Sigmoid colon (tissue), 7 donors: ENCODE measurements at regions of chr14 and their contacts with region 1.

Region 1: DNA sequence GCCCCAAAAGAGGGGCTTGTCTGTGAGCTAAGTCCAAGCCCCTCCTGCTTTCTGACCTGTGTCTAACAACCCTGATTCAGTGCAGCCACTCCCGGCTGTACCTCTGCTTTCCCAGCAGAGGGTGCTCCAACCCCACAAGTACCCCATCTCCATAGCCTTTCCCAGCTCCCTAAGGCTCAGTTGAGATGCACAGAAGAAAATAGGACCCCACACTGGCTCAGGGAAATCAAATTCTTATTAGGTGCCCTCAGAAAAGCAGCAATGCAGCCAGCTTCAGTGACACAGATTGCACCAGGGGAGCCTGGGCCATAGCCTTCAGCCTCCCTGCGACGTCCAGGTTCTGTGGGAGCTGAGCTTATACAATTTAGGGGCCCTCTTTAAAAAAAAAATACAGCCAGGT is 49.9 kb downstream of the LRRC74A start:
- DNase-seq: peak; percentile 82
- H3K4me3 ChIP-seq: no peak overlapping the region
- H3K27ac ChIP-seq: no peak overlapping the region
- H3K4me1 ChIP-seq: no peaks in the 10 kb centered on the region
- H3K27me3 ChIP-seq: no peaks in the 10 kb centered on the region
- CTCF ChIP-seq: peak; percentile 90 to 95 (median 92)
- EP300 ChIP-seq: no peak
- POLR2A ChIP-seq: no peak

Region 2: DNA sequence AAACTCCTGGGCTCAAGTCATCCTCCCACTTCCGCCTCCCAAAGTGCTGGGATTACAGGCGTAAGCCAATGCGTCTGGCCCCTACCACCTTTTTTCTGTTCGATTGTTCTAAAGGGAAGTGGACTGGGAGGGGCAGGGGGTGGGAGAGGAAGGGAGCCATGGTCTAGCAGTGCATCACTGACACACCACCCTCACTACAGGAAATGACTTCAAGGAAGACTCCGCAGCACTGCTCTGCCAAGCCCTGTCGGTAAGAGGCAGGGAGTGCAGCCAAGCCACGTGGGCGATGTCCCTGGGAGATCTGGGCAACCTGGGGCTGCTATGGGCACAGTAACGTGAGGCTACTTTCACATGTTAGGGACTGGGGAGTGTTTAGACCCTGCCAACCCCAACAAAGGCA is 31.9 kb before region 1 on chr14:
- intact Hi-C with region 1: no loop called
- DNase-seq: peak; percentile 75
- H3K4me3 ChIP-seq: no peak overlapping the region
- H3K27ac ChIP-seq: peak overlapping the region in 2 of 4 donors; percentile 5 to 59
- H3K4me1 ChIP-seq: peaks cover 0 to 6% (median 0%) of the 10 kb centered on the region in 4 donors
- H3K27me3 ChIP-seq: no peaks in the 10 kb centered on the region
- CTCF ChIP-seq: no peak
- EP300 ChIP-seq: no peak
- POLR2A ChIP-seq: no peak

Region 3: DNA sequence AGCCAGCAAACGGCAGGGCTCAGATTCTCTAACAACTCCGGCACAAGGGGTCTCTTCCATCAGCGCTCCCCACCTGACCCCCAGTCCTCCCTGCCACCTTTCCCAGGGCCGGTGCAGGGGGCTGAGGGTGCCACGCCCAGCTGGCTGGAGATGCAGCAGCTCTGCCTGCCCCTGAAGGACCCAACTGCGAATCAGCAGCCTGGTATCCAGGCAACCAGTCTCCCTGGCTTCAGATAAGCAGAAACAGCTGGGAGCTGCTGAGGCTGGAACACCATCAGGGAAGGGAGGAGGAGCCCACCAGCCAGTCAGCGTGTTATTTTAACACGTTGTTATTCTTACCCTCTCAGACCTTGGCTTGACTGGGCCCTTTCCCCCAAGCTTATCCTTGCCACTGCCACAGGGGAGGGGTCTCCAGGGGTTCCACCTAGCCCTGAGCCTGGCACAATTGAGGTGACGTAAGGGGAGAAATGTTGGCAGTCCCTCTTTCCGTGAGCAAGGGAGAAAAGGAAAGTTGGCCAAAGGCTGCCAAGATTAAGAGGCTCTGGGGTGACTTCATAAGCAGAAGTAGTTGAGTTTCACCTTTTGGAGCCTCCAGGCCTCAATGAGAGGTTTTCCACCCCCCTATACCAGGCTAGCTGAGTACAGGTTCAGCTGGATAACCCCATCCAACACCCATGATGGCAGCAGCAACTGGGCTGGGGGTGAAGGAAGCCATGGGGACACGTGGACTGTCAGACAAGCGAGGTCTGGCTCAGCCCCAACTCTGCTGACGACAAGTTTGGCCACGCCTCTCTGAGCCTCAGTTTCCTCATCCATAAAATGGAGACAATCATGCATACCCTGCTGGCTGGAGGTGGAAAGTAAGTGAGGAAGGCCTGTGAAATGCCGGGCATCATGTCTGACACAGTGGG is 61.4 kb after region 1 on chr14:
- intact Hi-C with region 1: no loop called
- DNase-seq: no peak
- H3K4me3 ChIP-seq: no peak overlapping the region
- H3K27ac ChIP-seq: peak overlapping the region in 3 of 4 donors; percentile 10 to 68 (median 47)
- H3K4me1 ChIP-seq: peaks cover 0 to 28% (median 22%) of the 10 kb centered on the region in 4 donors
- H3K27me3 ChIP-seq: no peaks in the 10 kb centered on the region
- CTCF ChIP-seq: no peak
- EP300 ChIP-seq: no peak
- POLR2A ChIP-seq: no peak

Region 4: GRCh38 chr14:77067632-77068514 is 191.8 kb after region 1 on chr14:
- intact Hi-C with region 1: loop called (anchors 1 kb)
- DNase-seq: peak; percentile 89
- H3K4me3 ChIP-seq: no peak overlapping the region
- H3K27ac ChIP-seq: peak overlapping the region in 3 of 4 donors; percentile 17 to 54 (median 20)
- H3K4me1 ChIP-seq: peaks cover 0 to 29% (median 19%) of the 10 kb centered on the region in 4 donors
- H3K27me3 ChIP-seq: no peaks in the 10 kb centered on the region
- CTCF ChIP-seq: peak; percentile 82 to 90 (median 88)
- EP300 ChIP-seq: no peak
- POLR2A ChIP-seq: no peak